HEK293 (cell line): ENCODE measurements at regions of chr3 and their contacts with region 1.

Region 1: DNA sequence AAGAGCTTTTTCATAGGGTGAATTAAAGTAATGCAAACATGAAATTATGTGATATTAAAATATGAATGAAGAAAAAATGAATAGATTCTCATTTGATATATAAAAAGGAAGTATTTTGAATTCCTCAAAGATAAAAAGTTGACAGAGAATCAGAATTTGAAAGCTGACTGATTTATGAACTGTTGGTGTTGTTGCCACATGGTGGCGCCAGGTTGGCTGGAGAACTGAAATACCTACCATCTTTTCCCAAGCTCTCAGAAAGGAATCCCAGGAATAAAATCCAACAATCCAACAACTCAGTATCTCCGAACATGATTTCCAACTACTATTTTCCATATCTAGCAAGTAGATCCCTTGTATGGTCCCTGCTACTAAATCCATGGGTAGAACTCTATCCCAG is 3.1 kb downstream of the MYRIP start:
- H3K4me3 ChIP-seq: no peak overlapping the region
- H3K27ac ChIP-seq: no peak overlapping the region
- H3K4me1 ChIP-seq: no peaks in the 10 kb centered on the region
- CTCF ChIP-seq: no peak

Region 2: DNA sequence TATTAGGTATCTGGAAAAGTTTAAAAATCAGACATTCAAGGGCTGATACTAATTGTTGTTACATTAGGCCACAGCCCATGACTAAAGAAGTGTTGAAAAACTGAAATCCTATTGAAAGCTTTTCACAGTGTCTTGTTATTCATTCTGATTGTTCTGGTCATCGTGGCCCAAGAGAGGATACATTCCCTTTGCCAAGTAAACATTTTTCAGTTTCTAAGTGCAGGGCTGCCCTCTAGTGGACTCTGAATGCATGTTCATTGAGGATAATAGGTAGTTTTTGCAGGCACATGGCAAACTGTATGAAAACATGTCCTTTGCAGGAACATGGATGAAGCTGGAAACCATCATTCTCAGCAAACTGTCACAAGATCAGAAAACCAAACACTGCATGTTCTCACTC is 178.0 kb after region 1 on chr3:
- CTCF ChIA-PET with region 1: interaction called, 11 read pairs
- POLR2A ChIA-PET with region 1: no interaction called
- H3K4me3 ChIP-seq: no peak overlapping the region
- H3K27ac ChIP-seq: no peak overlapping the region
- H3K4me1 ChIP-seq: no peaks in the 10 kb centered on the region
- CTCF ChIP-seq: no peak

Region 3: DNA sequence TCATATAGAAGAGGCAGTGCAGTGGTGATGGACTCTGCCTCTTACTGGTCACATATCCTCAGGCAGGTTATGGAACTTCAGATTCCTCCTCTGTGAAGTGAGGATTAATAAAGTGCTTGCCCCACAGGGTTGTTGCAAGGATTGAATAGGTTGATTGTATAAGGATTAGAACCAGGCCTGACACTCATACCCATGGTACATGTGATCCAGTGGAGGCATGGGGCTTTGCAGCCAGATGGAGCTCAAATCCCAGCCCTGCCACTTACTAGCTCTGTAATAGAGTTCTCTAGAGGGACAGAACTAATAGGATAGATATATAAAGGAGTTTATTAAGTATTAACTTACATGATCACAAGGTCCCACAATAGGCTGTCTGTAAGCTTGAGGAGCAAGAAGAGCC is 312.4 kb after region 1 on chr3:
- CTCF ChIA-PET with region 1: no interaction called
- POLR2A ChIA-PET with region 1: no interaction called
- H3K4me3 ChIP-seq: no peak overlapping the region
- H3K27ac ChIP-seq: no peak overlapping the region
- H3K4me1 ChIP-seq: no peaks in the 10 kb centered on the region
- CTCF ChIP-seq: no peak

Region 4: GRCh38 chr3:40179016-40179415 is 366.5 kb after region 1 on chr3:
- CTCF ChIA-PET with region 1: interaction called, 12 read pairs
- POLR2A ChIA-PET with region 1: no interaction called
- H3K4me3 ChIP-seq: no peak overlapping the region
- H3K27ac ChIP-seq: no peak overlapping the region
- H3K4me1 ChIP-seq: no peaks in the 10 kb centered on the region
- CTCF ChIP-seq: 0 out of 2 replicates have a peak, but pooled peaks have one; percentile 34

Region 5: GRCh38 chr3:40207796-40208195 is 395.3 kb after region 1 on chr3:
- CTCF ChIA-PET with region 1: no interaction called
- POLR2A ChIA-PET with region 1: no interaction called
- H3K4me3 ChIP-seq: no peak overlapping the region
- H3K27ac ChIP-seq: no peak overlapping the region
- H3K4me1 ChIP-seq: no peaks in the 10 kb centered on the region
- CTCF ChIP-seq: no peak